Activated T-helper 2 cell treated with anti-CD3 and anti-CD28 coated beads, Interferon-gamma antibody, Interleukin-2, Interleukin-4, amounts not matched to agents 10 μg/mL and 5 μg/mL and 100 μg/mL, durations not matched to agents 14 hours and 24 hours and 36 hours (primary cell): ENCODE measurements at regions of chr16 and their contacts with region 1.

Region 1: DNA sequence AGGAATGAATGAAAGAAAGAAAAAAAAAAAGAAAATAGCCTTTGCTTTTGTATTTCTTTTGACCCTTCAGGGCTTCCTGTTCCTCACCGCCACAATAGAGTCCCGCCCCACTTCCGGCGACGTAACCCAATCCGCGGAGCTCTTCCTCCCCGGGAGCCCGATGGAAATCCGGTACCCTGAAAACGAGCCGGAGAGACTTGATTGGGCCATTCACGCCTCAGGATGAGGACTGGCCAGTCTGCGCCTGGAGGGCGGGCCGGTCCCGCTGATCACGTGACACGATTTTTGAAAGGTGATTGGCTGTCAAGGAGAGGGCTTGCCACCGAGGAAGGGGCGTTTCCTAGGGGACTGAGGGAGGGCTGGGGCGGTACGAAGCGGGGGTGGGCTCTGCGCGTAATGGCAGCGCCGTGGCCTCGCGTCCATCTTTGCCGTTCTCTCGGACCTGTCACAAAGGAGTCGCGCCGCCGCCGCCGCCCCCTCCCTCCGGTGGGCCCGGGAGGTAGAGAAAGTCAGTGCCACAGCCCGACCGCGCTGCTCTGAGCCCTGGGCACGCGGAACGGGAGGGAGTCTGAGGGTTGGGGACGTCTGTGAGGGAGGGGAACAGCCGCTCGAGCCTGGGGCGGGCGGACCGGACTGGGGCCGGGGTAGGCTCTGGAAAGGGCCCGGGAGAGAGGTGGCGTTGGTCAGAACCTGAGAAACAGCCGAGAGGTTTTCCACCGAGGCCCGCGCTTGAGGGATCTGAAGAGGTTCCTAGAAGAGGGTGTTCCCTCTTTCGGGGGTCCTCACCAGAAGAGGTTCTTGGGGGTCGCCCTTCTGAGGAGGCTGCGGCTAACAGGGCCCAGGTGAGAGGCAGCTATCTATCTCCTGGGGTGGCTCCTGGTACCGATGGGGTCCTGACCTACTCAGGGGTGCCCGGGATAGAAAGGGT is at the starts of genes PSME3IP1 and RSPRY1:
- DNase-seq: peak; percentile 99
- H3K4me3 Mint-ChIP-seq: peak within 1 kb of the TSS; percentile 98
- H3K27ac Mint-ChIP-seq: peak within 1 kb of the TSS; percentile 96
- H3K4me1 Mint-ChIP-seq: peaks cover 36% of the 10 kb centered on the region
- H3K27me3 Mint-ChIP-seq: no peaks in the 10 kb centered on the region
- total RNA-seq, gene PSME3IP1: 109 and 125 TPM in 2 replicates
- total RNA-seq, gene RSPRY1: 33.3 and 43.0 TPM in 2 replicates

Region 2: DNA sequence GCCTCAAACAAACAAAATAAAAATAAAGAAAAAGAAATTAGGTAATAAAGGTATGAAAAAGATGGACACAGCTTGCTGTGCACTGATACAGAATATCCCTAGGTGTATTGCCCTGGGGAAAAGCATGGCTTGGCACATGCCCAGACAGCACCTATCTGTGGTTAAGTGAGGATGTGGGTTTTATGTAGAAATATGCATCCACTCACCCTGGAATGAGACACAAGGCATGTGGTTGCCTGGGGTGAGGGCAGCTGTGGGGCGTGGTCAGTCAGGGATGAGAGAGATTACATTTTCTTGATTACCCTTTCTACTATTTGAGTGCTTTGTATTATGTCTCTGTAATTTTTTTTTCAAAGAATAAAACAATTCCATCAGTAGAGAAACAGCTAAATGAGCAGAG is 91.4 kb after region 1 on chr16:
- intact Hi-C with region 1: loop called (anchors 5 kb)
- DNase-seq: peak; percentile 63
- H3K4me3 Mint-ChIP-seq: no peak overlapping the region
- H3K27ac Mint-ChIP-seq: peak overlapping the region; percentile 46
- H3K4me1 Mint-ChIP-seq: peaks cover 35% of the 10 kb centered on the region
- H3K27me3 Mint-ChIP-seq: peaks cover 7% of the 10 kb centered on the region